ENCODE measurements at regions of chr2 and their contacts with region 1.

Region 1: GRCh38 chr2:23426263-23426905 is 41.4 kb downstream of the KLHL29 start:
- DNase-seq: peak; percentile 83 to 93
- ATAC-seq: peak; percentile 81 to 87 (median 85)
- H3K4me3 ChIP-seq: no peak overlapping the region
- H3K27ac ChIP-seq: peak overlapping the region; percentile 88
- H3K4me1 ChIP-seq: peaks cover 36% of the 10 kb centered on the region
- H3K27me3 ChIP-seq: no peaks in the 10 kb centered on the region
- CTCF ChIP-seq: no peak

Region 2: GRCh38 chr2:23260621-23261020 is 165.8 kb before region 1 on chr2:
- intact Hi-C with region 1: no loop called
- DNase-seq: no peak
- ATAC-seq: no peak
- H3K4me3 ChIP-seq: no peak overlapping the region
- H3K27ac ChIP-seq: no peak overlapping the region
- H3K4me1 ChIP-seq: no peaks in the 10 kb centered on the region
- H3K27me3 ChIP-seq: no peaks in the 10 kb centered on the region
- CTCF ChIP-seq: no peak

Region 3: GRCh38 chr2:23513872-23514793 is 87.7 kb after region 1 on chr2:
- intact Hi-C with region 1: loop called (anchors 5 kb)
- DNase-seq: peak in 1 of 2 donors; percentile 15
- ATAC-seq: peak; percentile 40 to 55 (median 52)
- H3K4me3 ChIP-seq: no peak overlapping the region
- H3K27ac ChIP-seq: peak overlapping the region; percentile 65
- H3K4me1 ChIP-seq: peaks cover 54% of the 10 kb centered on the region
- H3K27me3 ChIP-seq: no peaks in the 10 kb centered on the region
- CTCF ChIP-seq: no peak

Region 4: GRCh38 chr2:23584054-23584745 is 157.8 kb after region 1 on chr2:
- intact Hi-C with region 1: loop called in 1 of 2 experiments (anchors 10 kb)
- DNase-seq: peak in 1 of 2 donors; percentile 79
- ATAC-seq: peak; percentile 53 to 81 (median 74)
- H3K4me3 ChIP-seq: no peak overlapping the region
- H3K27ac ChIP-seq: peak overlapping the region; percentile 78
- H3K4me1 ChIP-seq: peaks cover 21% of the 10 kb centered on the region
- H3K27me3 ChIP-seq: no peaks in the 10 kb centered on the region
- CTCF ChIP-seq: no peak